GM10248 (cell line): ENCODE measurements at regions of chr20 and their contacts with region 1.

Region 1: DNA sequence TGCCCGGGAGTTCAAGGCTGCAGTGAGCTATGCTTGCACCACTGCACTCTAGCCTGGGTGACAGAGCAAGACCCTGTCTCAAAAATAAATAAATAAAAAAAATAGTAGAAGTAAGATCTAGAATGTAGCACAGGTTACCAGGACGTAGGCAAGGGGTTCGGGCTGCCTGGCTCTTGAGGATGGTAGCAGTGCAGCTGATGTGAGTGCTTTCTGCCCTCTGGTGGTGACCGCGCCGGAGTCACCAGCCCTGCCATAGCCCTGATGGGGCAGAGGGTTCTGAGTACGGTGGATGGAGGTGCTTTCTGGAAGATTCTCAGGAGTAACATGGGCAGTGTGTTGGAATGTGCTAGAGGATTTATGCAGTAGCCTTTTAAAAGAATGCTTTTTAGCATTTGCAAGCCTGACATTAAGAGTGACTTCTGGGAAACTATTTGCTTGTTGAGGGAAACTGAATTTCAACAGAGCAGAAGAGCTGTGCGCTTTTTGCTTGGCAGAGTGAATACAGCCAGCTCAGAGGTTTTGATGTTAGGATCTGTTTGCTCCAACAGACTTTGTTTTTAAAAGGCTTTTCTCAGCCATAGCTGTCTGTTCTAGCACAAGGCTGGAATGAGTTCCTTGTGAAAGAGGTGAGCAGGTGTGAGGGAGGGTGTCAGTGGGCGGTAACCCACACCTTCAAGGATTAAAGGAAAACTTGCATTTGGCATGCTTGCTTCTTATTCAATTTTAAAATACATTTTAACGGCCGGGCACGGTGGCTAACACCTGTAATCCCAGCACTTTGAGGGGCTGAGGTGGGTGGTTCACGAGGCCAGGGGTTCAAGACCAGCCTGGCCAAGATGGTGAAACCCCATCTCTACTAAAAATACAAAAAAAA is 65.9 kb downstream of the PTPN1 start:
- DNase-seq: peak; percentile 65
- CTCF ChIP-seq: peak; percentile 69

Region 2: DNA sequence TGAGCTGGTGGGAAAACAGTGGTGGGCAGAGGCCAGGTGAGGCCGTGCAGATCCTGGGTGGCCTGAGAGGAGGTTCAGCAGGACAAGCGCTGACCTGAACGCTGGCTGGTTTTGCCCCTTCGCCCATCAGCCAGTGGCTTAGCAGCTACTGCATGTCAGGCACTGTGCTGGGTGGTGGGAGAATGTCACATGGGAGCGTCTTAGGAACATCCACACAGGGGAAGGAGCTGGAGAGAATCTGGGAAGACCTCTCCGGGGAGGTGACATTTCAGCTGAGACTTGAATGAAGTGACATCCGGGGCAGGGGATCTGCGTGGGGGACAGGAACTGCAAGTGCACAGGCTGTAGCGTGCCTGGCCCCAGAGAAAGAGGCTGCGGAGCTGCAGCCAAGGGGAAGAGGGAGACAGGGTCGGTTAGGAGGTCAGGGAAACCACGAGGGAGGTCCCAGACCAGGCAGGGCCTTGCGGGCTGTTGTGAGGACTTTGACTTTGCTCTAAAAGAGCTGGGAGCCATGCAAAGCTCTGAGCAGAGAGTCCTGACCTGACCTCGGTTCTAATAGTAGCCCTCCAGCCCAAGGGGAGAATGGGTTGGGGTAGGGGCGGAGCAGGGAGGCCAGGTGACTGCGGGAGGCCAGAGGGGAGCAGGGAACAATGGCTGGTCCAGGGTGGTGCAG is 222.7 kb before region 1 on chr20:
- CTCF ChIA-PET with region 1: no interaction called
- POLR2A ChIA-PET with region 1: no interaction called
- DNase-seq: no peak
- CTCF ChIP-seq: no peak

Region 3: GRCh38 chr20:50478162-50479036 is 97.7 kb before region 1 on chr20:
- CTCF ChIA-PET with region 1: interaction called, 18 read pairs
- POLR2A ChIA-PET with region 1: no interaction called
- DNase-seq: peak; percentile 70
- CTCF ChIP-seq: peak; percentile 55

Region 4: GRCh38 chr20:50561379-50562078 is 14.6 kb before region 1 on chr20:
- CTCF ChIA-PET with region 1: interaction called, 10 read pairs
- POLR2A ChIA-PET with region 1: no interaction called
- DNase-seq: no peak
- CTCF ChIP-seq: no peak

Region 5: DNA sequence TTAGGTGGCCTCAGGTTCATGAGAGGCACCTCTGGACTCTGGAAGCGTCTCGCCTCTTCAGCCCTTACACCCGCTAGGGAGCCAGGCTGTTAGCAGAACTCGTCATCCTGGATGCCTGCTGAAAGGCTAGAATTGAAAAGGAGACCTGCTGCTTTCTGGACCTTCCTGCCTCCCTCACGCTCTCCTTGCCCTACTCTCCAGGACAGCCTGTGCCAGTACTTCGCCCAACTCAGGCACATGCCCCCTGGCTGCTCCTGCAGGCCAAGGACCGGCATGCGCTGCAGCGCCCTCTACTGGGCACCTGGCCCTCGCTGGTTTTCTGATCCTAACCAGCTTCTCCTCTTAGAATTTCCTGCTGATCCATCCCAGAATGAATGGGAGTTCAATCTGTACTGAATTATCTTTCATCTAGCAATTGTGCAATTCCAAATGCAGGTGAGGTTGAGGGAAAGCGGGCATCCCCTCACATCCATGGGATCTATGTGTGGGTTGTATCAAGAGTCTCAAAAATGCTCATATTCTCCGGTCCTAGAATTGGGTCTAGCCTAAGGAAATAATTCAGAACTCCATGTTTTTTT is 12.0 kb after region 1 on chr20:
- CTCF ChIA-PET with region 1: interaction called, 14 read pairs
- POLR2A ChIA-PET with region 1: no interaction called
- DNase-seq: peak; percentile 83
- CTCF ChIP-seq: peak; percentile 86